AG04450 (cell line): ENCODE measurements at regions of chr1 and their contacts with region 1.

Region 1: DNA sequence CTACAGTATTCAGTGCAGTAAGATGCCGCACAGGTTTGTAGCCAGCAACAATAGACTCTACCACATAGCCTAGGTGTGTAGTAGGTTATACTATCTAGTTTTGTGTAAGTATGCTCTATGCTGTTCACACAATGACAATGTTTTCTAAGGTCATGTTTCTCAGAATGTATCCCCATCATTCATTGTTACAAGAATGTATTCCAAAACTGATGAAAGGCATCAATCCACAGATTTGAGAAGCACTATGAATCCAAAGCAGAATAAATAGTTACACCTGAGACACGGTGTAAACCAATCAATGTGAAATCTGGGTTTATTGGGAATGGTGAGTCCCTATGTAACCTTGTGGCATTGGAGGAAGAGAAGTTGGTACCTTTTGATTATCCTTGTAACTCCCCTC is 54.5 kb upstream of the MARK1 start:
- DNase-seq: no peak
- H3K4me3 ChIP-seq: no peak overlapping the region
- H3K27ac ChIP-seq: no peak overlapping the region
- H3K27me3 ChIP-seq: no peaks in the 10 kb centered on the region
- CTCF ChIP-seq: no peak

Region 2: GRCh38 chr1:219257751-219258150 is 1215.7 kb before region 1 on chr1:
- CTCF ChIA-PET with region 1: interaction called, 11 read pairs
- POLR2A ChIA-PET with region 1: no interaction called
- DNase-seq: no peak
- H3K4me3 ChIP-seq: no peak overlapping the region
- H3K27ac ChIP-seq: no peak overlapping the region
- H3K27me3 ChIP-seq: no peaks in the 10 kb centered on the region
- CTCF ChIP-seq: no peak

Region 3: GRCh38 chr1:220680085-220680687 is 206.7 kb after region 1 on chr1:
- CTCF ChIA-PET with region 1: no interaction called
- POLR2A ChIA-PET with region 1: no interaction called
- DNase-seq: no peak
- H3K4me3 ChIP-seq: no peak overlapping the region
- H3K27ac ChIP-seq: no peak overlapping the region
- H3K27me3 ChIP-seq: no peaks in the 10 kb centered on the region
- CTCF ChIP-seq: peak; percentile 80